CD4-positive, alpha-beta memory T cell (primary cell): ENCODE measurements at regions of chr17 and their contacts with region 1.

Region 1: DNA sequence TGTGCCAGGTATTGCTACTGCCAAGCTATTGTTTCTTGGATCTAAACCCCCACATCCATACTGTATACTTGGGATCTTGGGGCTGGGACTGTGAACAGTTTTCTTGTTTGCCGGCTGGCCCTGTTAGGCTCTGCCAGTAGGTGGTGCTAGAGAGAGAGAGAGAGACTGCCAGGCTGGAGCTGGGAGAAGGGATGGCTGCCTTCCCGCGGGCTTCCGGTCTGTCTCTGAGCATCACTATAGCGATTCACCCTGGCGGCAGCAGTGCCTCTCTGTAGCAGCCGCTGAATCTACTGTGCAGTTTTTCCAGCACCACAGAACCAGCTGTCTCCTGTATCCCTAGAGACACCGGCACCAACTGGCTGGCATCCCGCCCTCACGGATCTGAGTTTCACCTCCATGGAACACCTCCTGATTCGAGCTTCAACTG is 201.2 kb downstream of the UTP18 start:
- DNase-seq: peak; percentile 29 to 56 (median 36)
- H3K4me3 ChIP-seq: no peak overlapping the region
- H3K4me3 Mint-ChIP-seq: no peak overlapping the region
- H3K27ac ChIP-seq: no peak overlapping the region
- H3K27ac Mint-ChIP-seq: no peak overlapping the region
- H3K4me1 ChIP-seq: no peaks in the 10 kb centered on the region
- H3K4me1 Mint-ChIP-seq: no peaks in the 10 kb centered on the region
- H3K27me3 ChIP-seq: no peaks in the 10 kb centered on the region
- H3K27me3 Mint-ChIP-seq: peaks cover 2 to 3% of the 10 kb centered on the region in 2 donors

Region 2: DNA sequence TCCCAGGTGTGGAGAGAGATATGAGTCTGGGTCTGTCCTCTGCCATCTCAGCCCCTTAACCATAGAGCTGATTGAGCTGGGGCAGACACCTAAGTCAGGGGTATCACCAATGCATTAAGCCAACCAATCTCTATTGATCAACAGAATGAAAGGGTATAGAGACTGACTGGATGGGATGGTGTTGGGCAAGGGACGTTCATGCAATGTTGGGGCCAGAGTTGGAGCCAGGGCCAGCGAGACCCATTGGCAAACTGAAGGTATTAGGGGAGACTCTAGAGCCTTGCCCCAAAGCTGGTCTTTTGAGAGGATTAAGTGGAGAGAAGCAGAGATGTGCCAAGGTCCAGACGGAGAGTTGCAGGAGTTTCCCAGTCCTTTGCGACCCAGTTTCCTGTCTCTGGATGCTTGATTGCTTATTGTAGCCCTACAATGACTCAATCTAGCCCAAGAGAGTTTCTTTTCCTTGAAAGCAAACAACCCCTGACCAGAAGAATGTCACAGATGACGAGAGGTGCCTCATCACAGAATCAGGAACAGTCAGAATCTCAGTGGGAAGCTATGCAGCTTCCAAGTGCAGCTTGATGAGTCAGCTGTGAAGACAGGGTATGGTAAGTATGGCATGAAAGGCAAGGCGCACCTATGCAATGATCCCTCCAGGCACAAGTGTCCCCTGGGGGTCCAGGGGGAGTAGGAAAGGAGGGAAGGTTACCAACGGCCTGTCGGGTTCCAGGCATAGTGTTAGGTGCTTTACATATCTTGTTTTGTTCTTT is 64.0 kb before region 1 on chr17:
- CTCF ChIA-PET with region 1: no interaction called
- POLR2A ChIA-PET with region 1: no interaction called
- intact Hi-C with region 1: no loop called
- DNase-seq: no peak
- H3K4me3 ChIP-seq: no peak overlapping the region
- H3K4me3 Mint-ChIP-seq: no peak overlapping the region
- H3K27ac ChIP-seq: no peak overlapping the region
- H3K27ac Mint-ChIP-seq: no peak overlapping the region
- H3K4me1 ChIP-seq: no peaks in the 10 kb centered on the region
- H3K4me1 Mint-ChIP-seq: no peaks in the 10 kb centered on the region
- H3K27me3 ChIP-seq: no peaks in the 10 kb centered on the region
- H3K27me3 Mint-ChIP-seq: peaks cover 3 to 8% of the 10 kb centered on the region in 2 donors

Region 3: DNA sequence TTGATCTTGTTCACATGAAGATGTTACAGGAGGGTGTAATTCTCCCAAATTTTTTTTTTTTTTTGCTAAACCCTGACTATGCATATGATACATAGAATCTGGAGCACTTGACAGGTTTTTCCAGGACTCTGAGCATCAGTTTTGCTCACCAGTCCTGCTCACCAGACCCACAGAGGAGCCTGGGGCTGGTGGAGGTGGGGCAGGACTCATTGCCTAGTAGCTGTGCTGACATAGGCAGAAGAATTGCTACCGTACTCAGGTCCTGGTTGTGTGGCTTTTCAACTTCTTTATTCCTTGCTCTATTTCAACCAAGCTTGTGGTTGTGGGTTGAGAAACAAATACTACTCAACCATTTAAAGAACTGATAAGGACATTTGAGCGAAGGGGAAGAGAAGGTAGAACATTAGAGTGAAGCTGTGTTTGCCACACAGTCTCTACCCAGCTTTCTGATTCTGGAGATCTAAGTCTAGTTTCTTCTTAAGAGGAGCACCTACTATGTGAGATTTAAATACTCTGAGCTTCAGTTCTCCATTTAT is 11.1 kb after region 1 on chr17:
- CTCF ChIA-PET with region 1: interaction called, 31 read pairs
- POLR2A ChIA-PET with region 1: no interaction called
- intact Hi-C with region 1: no loop called
- DNase-seq: no peak
- H3K4me3 ChIP-seq: no peak overlapping the region
- H3K4me3 Mint-ChIP-seq: no peak overlapping the region
- H3K27ac ChIP-seq: no peak overlapping the region
- H3K27ac Mint-ChIP-seq: peak overlapping the region in 1 of 7 donors; percentile 25
- H3K4me1 ChIP-seq: no peaks in the 10 kb centered on the region
- H3K4me1 Mint-ChIP-seq: no peaks in the 10 kb centered on the region
- H3K27me3 ChIP-seq: no peaks in the 10 kb centered on the region
- H3K27me3 Mint-ChIP-seq: peaks cover 5 to 10% of the 10 kb centered on the region in 2 donors